ENCODE measurements at regions of chr1 and their contacts with region 1.

Region 1: GRCh38 chr1:51445351-51446090 is 73.5 kb downstream of the EPS15 start:
- DNase-seq: no peak
- ATAC-seq: peak; percentile 25 to 51
- H3K4me3 ChIP-seq: no peak overlapping the region
- H3K27ac ChIP-seq: peak overlapping the region in 1 of 4 donors; percentile 22
- H3K4me1 ChIP-seq: peaks cover 5 to 16% of the 10 kb centered on the region in 2 donors
- H3K27me3 ChIP-seq: no peaks in the 10 kb centered on the region
- CTCF ChIP-seq: no peak
- POLR2A ChIP-seq: no peak

Region 2: DNA sequence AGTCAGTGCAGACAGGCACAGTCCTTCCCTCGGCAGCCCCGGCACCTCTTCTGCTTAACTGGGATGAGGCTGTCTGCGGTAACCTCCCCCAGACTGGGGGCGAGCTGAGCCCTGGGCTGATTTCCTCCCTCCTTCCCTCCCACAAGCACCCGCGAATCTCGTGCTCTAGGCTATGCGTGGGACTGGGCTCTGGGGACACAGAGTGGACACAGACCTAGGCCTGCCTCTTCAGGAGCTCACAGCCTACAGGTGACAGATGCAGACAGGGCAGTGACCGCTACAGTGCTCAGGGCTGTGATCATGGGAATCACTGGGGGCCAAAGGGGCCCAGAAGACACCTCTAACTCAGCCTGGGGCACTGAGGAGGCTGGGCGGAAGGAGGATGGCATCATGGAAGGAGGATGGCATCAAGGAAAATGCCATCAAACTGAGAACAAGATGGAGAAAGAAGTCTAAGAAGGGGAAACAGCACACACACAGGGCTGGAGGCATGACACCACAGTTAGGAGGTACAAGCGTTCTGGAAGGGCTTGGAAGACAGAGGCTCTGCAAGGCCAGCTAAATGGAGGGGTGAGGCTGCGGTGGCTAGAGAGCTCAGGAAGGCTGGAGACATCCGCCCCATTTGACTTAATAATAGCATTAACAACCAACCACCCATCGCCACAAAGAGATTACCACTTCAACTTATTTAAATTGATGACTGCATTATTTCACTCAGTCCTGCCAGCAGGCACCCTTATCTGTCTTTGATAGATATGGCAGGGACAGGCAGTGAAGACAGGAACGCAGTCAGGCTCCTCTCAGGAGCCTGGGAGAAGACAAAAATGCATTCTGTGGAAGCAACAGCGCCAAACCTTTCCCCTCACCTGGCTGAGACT is 119.4 kb before region 1 on chr1:
- in situ Hi-C with region 1: no loop called
- intact Hi-C with region 1: no loop called
- DNase-seq: no peak
- ATAC-seq: no peak
- H3K4me3 ChIP-seq: no peak overlapping the region
- H3K27ac ChIP-seq: no peak overlapping the region
- H3K4me1 ChIP-seq: peaks cover 5% of the 10 kb centered on the region in 2 donors
- H3K27me3 ChIP-seq: no peaks in the 10 kb centered on the region
- CTCF ChIP-seq: no peak
- POLR2A ChIP-seq: no peak

Region 3: GRCh38 chr1:51340380-51340779 is 105.1 kb before region 1 on chr1:
- in situ Hi-C with region 1: no loop called
- intact Hi-C with region 1: no loop called
- DNase-seq: no peak
- ATAC-seq: no peak
- H3K4me3 ChIP-seq: no peak overlapping the region
- H3K27ac ChIP-seq: no peak overlapping the region
- H3K4me1 ChIP-seq: no peaks in the 10 kb centered on the region
- H3K27me3 ChIP-seq: peaks cover 17 to 21% (median 19%) of the 10 kb centered on the region in 3 donors
- CTCF ChIP-seq: no peak
- POLR2A ChIP-seq: no peak

Region 4: GRCh38 chr1:51372561-51372960 is 73.0 kb before region 1 on chr1:
- in situ Hi-C with region 1: no loop called
- intact Hi-C with region 1: loop called (anchors 2 kb)
- DNase-seq: no peak
- ATAC-seq: no peak
- H3K4me3 ChIP-seq: no peak overlapping the region
- H3K27ac ChIP-seq: no peak overlapping the region
- H3K4me1 ChIP-seq: no peaks in the 10 kb centered on the region
- H3K27me3 ChIP-seq: no peaks in the 10 kb centered on the region
- CTCF ChIP-seq: no peak
- POLR2A ChIP-seq: no peak

Region 5: DNA sequence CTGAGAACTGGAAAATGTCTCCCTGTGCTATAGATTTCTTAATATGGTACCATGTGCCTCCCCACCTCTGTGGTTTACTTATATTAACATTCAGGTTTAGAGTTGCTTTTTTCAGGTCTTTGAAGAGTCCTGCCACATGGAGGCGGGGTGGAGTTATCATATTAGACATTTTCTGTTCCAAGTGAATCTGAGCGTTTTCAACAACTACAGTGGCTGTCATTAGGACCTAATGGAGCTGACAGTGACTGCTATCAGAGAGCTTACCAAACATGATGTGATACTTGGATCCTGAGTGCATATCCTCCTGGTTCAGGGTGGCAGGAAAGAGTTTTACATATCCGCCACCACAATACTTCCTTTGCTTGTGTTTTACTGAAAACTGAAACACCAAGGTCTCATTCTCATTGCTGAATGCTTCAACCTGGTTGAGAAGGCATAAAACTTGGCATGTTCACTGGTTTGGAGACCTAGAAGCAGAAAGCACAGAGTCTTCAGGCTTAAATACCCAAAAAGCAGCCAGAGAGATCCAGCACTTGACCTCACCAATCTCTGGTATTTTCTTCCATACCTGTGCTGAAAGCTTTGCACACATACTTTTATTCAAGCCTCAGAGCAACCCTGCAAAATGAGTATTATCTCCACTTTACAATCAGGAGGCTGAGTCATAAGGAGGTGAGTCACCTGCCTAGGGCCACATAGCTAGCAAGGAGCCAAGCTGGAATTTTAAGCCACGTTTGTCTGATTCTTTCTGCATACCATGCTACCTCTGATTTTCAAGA is 124.0 kb after region 1 on chr1:
- in situ Hi-C with region 1: no loop called
- intact Hi-C with region 1: no loop called
- DNase-seq: no peak
- ATAC-seq: peak; percentile 36 to 60
- H3K4me3 ChIP-seq: no peak overlapping the region
- H3K27ac ChIP-seq: peak overlapping the region; percentile 10 to 78 (median 70)
- H3K4me1 ChIP-seq: peaks cover 53 to 58% of the 10 kb centered on the region in 2 donors
- H3K27me3 ChIP-seq: no peaks in the 10 kb centered on the region
- CTCF ChIP-seq: no peak
- POLR2A ChIP-seq: no peak